Ascending aorta (tissue), 2 donors: ENCODE measurements at regions of chr14 and their contacts with region 1.

Region 1: DNA sequence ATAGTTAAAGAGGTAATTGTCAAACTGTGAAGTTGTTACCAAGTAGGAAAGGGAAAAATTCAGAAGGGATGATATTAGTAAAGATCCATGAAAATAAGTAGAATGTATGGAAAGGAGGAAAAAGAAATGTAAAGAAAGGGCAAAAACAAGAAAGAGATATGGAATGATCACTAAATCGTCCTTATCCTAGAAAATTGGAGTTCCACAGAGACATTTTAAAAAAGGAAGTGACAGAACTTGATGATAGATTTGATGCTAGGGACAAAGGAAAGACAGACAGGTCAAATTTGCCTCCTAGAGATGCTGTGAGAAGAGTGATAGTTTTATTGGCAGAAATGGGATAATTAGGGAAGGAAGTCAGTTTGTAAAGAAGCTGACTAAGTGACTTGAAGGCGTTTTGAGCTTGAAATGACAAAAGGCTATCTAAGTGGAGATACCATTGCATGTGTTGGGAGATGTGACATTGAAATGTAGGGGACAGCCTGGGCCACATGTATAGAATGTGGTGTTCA is 20.6 kb downstream of the TTC8 start:
- DNase-seq: no peak
- H3K4me3 ChIP-seq: no peak overlapping the region
- H3K27ac ChIP-seq: no peak overlapping the region
- H3K4me1 ChIP-seq: no peaks in the 10 kb centered on the region
- H3K27me3 ChIP-seq: no peaks in the 10 kb centered on the region
- CTCF ChIP-seq: no peak

Region 2: DNA sequence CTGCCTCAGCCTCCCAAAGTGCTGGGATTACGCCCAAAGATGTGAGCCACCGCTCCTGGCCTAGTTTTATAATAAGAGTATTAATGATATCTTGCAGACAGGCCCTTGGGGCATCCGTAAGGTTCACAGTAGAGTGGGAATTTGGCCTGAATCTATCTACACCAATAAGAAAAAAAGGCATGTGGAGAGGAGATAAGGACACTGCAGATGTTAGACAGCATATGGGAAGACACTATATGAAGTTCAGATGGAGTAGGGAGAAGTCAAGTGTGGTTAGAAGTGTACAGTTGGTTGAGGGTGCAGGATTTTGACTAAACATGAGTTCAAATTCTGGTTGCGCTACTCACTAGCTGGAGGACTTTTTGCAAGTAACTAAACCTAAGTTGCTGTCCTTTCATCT is 29.1 kb before region 1 on chr14:
- intact Hi-C with region 1: loop called (anchors 2 kb)
- DNase-seq: no peak
- H3K4me3 ChIP-seq: no peak overlapping the region
- H3K27ac ChIP-seq: no peak overlapping the region
- H3K4me1 ChIP-seq: no peaks in the 10 kb centered on the region
- H3K27me3 ChIP-seq: no peaks in the 10 kb centered on the region
- CTCF ChIP-seq: no peak